Calu3 (cell line): ENCODE measurements at regions of chr13 and their contacts with region 1.

Region 1: DNA sequence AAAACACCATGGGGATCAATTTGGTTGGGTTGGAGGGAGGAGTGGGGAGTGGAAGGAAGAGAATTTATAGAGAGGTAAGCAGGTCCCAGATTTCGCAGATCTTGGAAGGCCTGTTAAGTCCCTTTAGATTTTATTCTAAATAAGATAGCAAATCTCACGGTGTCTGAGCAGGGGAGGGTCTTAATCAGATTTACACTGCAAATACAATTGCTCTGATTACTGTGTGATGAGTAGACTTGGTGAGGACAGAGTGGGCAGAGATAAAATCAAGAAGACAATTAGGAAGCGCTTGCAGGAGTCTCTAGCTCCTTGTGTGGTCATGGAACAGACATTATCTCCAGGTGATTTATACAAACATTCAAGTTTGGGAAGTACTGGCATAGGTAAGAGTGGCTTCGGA is 126.0 kb downstream of the GPC6 start:
- DNase-seq: no peak
- H3K4me3 Mint-ChIP-seq: no peak overlapping the region
- H3K27ac Mint-ChIP-seq: no peak overlapping the region
- H3K4me1 Mint-ChIP-seq: no peaks in the 10 kb centered on the region
- H3K27me3 Mint-ChIP-seq: no peaks in the 10 kb centered on the region
- CTCF ChIP-seq: no peak

Region 2: GRCh38 chr13:93996481-93996880 is 643.9 kb after region 1 on chr13:
- CTCF ChIA-PET with region 1: no interaction called
- intact Hi-C with region 1: loop called (anchors 5 kb)
- DNase-seq: no peak
- H3K4me3 Mint-ChIP-seq: no peak overlapping the region
- H3K27ac Mint-ChIP-seq: no peak overlapping the region
- H3K4me1 Mint-ChIP-seq: no peaks in the 10 kb centered on the region
- H3K27me3 Mint-ChIP-seq: no peaks in the 10 kb centered on the region
- CTCF ChIP-seq: no peak